MCF 10A (cell line): ENCODE measurements at regions of chr1 and their contacts with region 1.

Region 1: GRCh38 chr1:206094024-206094423 is 23.2 kb downstream of the AVPR1B start:
- DNase-seq: no peak
- H3K4me3 Mint-ChIP-seq: no peak overlapping the region
- H3K27ac Mint-ChIP-seq: no peak overlapping the region
- H3K4me1 Mint-ChIP-seq: no peaks in the 10 kb centered on the region
- H3K27me3 Mint-ChIP-seq: peaks cover 9% of the 10 kb centered on the region
- CTCF ChIP-seq: no peak

Region 2: GRCh38 chr1:206080026-206080820 is 13.8 kb before region 1 on chr1:
- CTCF ChIA-PET with region 1: interaction called, 7 read pairs
- POLR2A ChIA-PET with region 1: interaction called, 14 read pairs
- intact Hi-C with region 1: no loop called
- DNase-seq: no peak
- H3K4me3 Mint-ChIP-seq: no peak overlapping the region
- H3K27ac Mint-ChIP-seq: no peak overlapping the region
- H3K4me1 Mint-ChIP-seq: peaks cover 5% of the 10 kb centered on the region
- H3K27me3 Mint-ChIP-seq: peaks cover 6% of the 10 kb centered on the region
- CTCF ChIP-seq: no peak